ENCODE measurements at regions of chr11 and their contacts with region 1.

Region 1: GRCh38 chr11:17209939-17210245 is 2.1 kb upstream of the PIK3C2A start:
- DNase-seq: no peak
- ATAC-seq: no peak
- H3K4me3 ChIP-seq: no peak overlapping the region
- H3K4me3 Mint-ChIP-seq: peak overlapping the region in 2 of 3 donors; percentile 96 to 99
- H3K27ac ChIP-seq: peak overlapping the region; percentile 13
- H3K27ac Mint-ChIP-seq: peak overlapping the region in 1 of 2 donors; percentile 96
- H3K4me1 ChIP-seq: peaks cover 13 to 22% of the 10 kb centered on the region in 2 experiments
- H3K4me1 Mint-ChIP-seq: peaks cover 28 to 35% (median 34%) of the 10 kb centered on the region in 3 donors
- H3K27me3 ChIP-seq: no peaks in the 10 kb centered on the region
- H3K27me3 Mint-ChIP-seq: no peaks in the 10 kb centered on the region

Region 2: DNA sequence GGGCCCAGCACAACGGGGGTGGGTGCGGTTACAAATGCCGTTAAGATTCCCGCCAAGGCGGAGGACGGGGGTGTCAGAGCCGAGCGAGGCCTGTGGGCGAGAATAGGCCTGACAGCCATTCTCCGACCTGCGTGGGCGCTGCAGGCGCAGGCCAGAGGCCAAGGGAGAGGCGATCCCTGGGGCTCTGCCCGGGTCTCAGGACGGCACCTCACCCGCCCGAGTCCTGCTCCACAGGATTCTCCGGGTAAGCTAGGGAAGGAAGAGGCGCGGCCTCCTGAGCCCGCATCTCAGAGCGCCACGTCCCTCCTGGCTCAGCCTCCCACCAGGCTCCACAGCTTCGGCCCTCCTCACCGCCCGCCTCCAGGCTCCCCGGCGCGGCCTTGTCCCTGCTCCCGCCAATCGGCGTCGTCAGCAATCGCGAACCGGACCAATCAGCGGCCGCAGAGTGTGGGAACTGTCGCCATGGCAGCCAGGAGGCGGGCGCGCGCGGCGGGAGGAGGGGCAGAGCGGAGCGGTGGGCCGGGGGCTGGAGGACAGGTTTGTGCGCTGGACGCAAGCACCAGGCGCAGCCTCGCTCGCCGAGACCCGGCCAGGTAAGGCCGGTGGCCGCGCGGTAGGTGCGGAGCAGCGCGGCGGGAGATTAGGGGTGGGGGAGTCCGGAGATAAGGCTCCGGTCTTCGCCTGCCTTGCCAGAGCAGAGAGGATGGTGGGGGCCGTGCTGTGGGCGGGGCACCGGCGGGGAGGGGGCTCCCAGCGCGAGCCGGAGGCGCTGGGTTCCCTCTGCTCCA is 66.5 kb after region 1 on chr11 and contains the start of gene NUCB2:
- CTCF ChIA-PET with region 1: interaction called in 1 of 2 experiments, 3 read pairs
- POLR2A ChIA-PET with region 1: interaction called in 1 of 2 experiments, 16 read pairs
- DNase-seq: peak; percentile 89 to 97 (median 95)
- ATAC-seq: peak; percentile 93 to 95 (median 94)
- H3K4me3 ChIP-seq: peak within 1 kb of the TSS; percentile 80 to 92
- H3K4me3 Mint-ChIP-seq: peak within 1 kb of the TSS; percentile 80 to 82 (median 81)
- H3K27ac ChIP-seq: peak within 1 kb of the TSS; percentile 86
- H3K27ac Mint-ChIP-seq: peak within 1 kb of the TSS; percentile 85
- H3K4me1 ChIP-seq: peaks cover 18 to 36% of the 10 kb centered on the region in 2 experiments
- H3K4me1 Mint-ChIP-seq: peaks cover 36 to 41% (median 40%) of the 10 kb centered on the region in 3 donors
- H3K27me3 ChIP-seq: peaks cover 0 to 3% of the 10 kb centered on the region in 2 experiments
- H3K27me3 Mint-ChIP-seq: peaks cover 0 to 1% of the 10 kb centered on the region in 2 donors
- total RNA-seq, gene NUCB2: 43.6 to 119 (median 67.0) TPM

Region 3: GRCh38 chr11:17406818-17407149 is 196.9 kb after region 1 on chr11:
- CTCF ChIA-PET with region 1: interaction called in 1 of 2 experiments, 10 read pairs
- POLR2A ChIA-PET with region 1: no interaction called
- DNase-seq: no peak
- ATAC-seq: no peak
- H3K4me3 ChIP-seq: no peak overlapping the region
- H3K4me3 Mint-ChIP-seq: no peak overlapping the region
- H3K27ac ChIP-seq: no peak overlapping the region
- H3K27ac Mint-ChIP-seq: no peak overlapping the region
- H3K4me1 ChIP-seq: no peaks in the 10 kb centered on the region
- H3K4me1 Mint-ChIP-seq: no peaks in the 10 kb centered on the region
- H3K27me3 ChIP-seq: peaks cover 0 to 7% of the 10 kb centered on the region in 2 experiments
- H3K27me3 Mint-ChIP-seq: no peaks in the 10 kb centered on the region

Measured in T-cell (primary cell).